ENCODE measurements at regions of chr14 and their contacts with region 1.

Region 1: DNA sequence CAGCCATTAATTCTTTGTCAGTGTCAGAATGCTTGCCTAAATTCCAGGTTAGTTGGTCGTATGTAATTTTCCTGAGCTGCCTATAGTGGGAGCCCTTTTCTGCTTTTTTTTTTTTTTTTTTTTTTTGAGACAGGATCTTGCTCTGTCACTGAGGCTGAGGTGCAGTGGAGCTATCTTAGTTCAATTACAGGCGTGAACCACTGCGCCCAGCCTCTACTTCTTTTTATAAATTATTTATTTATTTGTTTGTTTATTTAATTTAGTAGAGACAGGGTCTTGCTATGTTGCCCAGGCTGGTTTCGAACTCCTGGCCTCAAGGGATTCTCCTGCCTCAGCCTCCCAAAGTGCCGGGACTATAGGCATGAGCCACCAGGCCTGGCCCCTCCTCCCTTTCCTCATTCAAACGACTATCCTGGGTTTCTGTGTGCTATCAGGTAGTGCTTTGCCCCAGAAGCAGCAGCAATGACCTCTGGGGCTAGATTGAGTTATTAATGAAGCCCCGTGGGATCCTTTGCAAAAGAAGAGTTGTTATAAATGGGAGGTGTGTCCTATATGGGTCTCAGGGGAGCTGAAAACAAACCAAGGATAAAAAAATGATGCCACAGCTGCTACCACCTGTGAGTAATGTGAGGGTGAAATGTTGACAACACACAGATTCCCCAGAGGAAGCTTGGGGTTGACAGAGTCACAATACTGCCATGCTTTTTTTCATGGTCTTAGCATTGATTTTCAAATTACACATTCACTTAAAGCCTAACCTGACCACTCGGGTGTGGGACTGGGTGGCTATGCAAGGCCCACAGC is 34.6 kb upstream of the NFKBIA start:
- DNase-seq: no peak
- H3K4me3 ChIP-seq: no peak overlapping the region
- H3K27ac ChIP-seq: no peak overlapping the region
- H3K4me1 ChIP-seq: no peaks in the 10 kb centered on the region
- H3K27me3 ChIP-seq: peaks cover 0 to 2% of the 10 kb centered on the region in 2 experiments
- CTCF ChIP-seq: peak; percentile 47 to 53
- POLR2A ChIP-seq: no peak

Region 2: GRCh38 chr14:35425850-35426249 is 13.3 kb before region 1 on chr14:
- CTCF ChIA-PET with region 1: interaction called, 28 read pairs
- POLR2A ChIA-PET with region 1: no interaction called
- dilution Hi-C with region 1: no loop called
- intact Hi-C with region 1: no loop called
- DNase-seq: no peak
- H3K4me3 ChIP-seq: no peak overlapping the region
- H3K27ac ChIP-seq: no peak overlapping the region
- H3K4me1 ChIP-seq: peaks cover 8% of the 10 kb centered on the region
- H3K27me3 ChIP-seq: no peaks in the 10 kb centered on the region
- CTCF ChIP-seq: no peak
- POLR2A ChIP-seq: no peak

Region 3: GRCh38 chr14:35533357-35534207 is 94.5 kb after region 1 on chr14 and contains the start of gene INSM2:
- CTCF ChIA-PET with region 1: interaction called, 12 read pairs
- POLR2A ChIA-PET with region 1: no interaction called
- dilution Hi-C with region 1: no loop called
- intact Hi-C with region 1: no loop called
- DNase-seq: peak; percentile 60
- H3K4me3 ChIP-seq: peak within 1 kb of the TSS; percentile 48 to 80 (median 63)
- H3K27ac ChIP-seq: no peak within 1 kb of the TSS
- H3K4me1 ChIP-seq: peaks cover 17% of the 10 kb centered on the region
- H3K27me3 ChIP-seq: peaks cover 41 to 61% of the 10 kb centered on the region in 2 experiments
- CTCF ChIP-seq: no peak
- POLR2A ChIP-seq: no peak
- total RNA-seq, gene INSM2: not detected in 2 replicates

Region 4: DNA sequence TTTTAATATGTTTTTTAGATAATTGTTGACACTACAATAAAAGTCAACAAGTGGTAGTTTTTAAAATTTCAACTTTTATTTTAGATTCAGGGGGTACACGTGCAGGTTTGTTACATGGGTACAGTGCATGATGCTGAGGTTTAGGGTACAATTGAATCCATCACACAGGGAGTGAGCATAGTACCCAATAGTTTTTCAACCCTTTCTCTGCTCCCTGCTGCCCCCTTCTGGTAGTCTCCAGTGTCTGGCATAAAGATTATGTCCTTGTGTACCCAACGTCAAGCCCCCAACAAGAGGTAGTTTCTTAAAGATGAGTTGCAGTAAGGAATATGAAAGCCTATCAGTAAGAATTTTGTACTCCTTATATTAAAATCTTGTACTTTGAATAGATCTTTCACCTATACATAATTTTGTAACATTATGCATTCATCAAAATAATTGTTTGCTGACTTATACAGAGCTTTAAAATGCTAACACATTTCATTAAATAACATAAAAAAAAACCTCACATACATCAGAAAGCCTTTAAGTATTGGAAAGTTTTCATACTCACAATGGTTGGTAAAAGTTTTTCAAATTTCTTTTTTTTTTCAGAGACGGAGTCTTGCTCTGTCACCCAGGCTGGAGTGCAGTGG is 375.4 kb after region 1 on chr14:
- CTCF ChIA-PET with region 1: interaction called, 28 read pairs
- POLR2A ChIA-PET with region 1: no interaction called
- dilution Hi-C with region 1: no loop called
- intact Hi-C with region 1: loop called (anchors 5 kb)
- DNase-seq: peak; percentile 66
- H3K4me3 ChIP-seq: no peak overlapping the region
- H3K27ac ChIP-seq: no peak overlapping the region
- H3K4me1 ChIP-seq: no peaks in the 10 kb centered on the region
- H3K27me3 ChIP-seq: peaks cover 2 to 10% of the 10 kb centered on the region in 2 experiments
- CTCF ChIP-seq: peak; percentile 64 to 75
- POLR2A ChIP-seq: no peak